Panc1 (cell line): ENCODE measurements at regions of chr17 and their contacts with region 1.

Region 1: GRCh38 chr17:65137021-65137991 is at the start of gene RGS9:
- DNase-seq: no peak
- ATAC-seq: peak; percentile 93
- H3K4me3 ChIP-seq: peak within 1 kb of the TSS; percentile 40 to 57
- H3K27ac ChIP-seq: no peak within 1 kb of the TSS
- H3K4me1 ChIP-seq: no peaks in the 10 kb centered on the region
- H3K27me3 ChIP-seq: no peaks in the 10 kb centered on the region
- CTCF ChIP-seq: peak; percentile 96
- total RNA-seq, gene RGS9: 3.3 TPM

Region 2: DNA sequence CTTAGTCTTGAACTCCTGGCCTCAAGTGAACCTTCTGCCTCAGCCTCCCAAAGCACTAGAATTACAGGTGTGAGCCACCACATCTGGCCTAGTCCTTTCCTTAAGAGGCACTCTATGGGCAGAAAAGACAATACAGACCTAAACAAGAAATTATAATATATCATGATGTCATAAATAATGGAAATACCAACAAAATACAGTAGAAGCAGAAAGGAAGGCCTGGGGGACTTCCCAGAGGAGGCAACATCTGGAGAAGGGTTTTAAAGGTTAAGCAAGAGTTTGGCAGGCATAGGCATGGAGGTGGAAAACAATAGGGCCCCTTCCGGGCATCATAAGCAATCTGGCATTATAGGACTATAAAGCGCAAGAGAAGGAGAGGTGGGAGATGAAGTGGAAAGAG is 55.9 kb before region 1 on chr17:
- CTCF ChIA-PET with region 1: interaction called, 13 read pairs
- POLR2A ChIA-PET with region 1: no interaction called
- in situ Hi-C with region 1: no loop called
- intact Hi-C with region 1: no loop called
- DNase-seq: no peak
- ATAC-seq: no peak
- H3K4me3 ChIP-seq: no peak overlapping the region
- H3K27ac ChIP-seq: no peak overlapping the region
- H3K4me1 ChIP-seq: no peaks in the 10 kb centered on the region
- H3K27me3 ChIP-seq: no peaks in the 10 kb centered on the region
- CTCF ChIP-seq: no peak

Region 3: GRCh38 chr17:65163990-65164495 is 26.7 kb after region 1 on chr17:
- CTCF ChIA-PET with region 1: no interaction called
- POLR2A ChIA-PET with region 1: no interaction called
- in situ Hi-C with region 1: no loop called
- intact Hi-C with region 1: no loop called
- DNase-seq: no peak
- ATAC-seq: peak; percentile 66; the same call in 1 of the 2 replicates
- H3K4me3 ChIP-seq: no peak overlapping the region
- H3K27ac ChIP-seq: no peak overlapping the region
- H3K4me1 ChIP-seq: no peaks in the 10 kb centered on the region
- H3K27me3 ChIP-seq: no peaks in the 10 kb centered on the region
- CTCF ChIP-seq: no peak